Left ventricle myocardium inferior (tissue), 1 donor: ENCODE measurements at regions of chr1 and their contacts with region 1.

Region 1: DNA sequence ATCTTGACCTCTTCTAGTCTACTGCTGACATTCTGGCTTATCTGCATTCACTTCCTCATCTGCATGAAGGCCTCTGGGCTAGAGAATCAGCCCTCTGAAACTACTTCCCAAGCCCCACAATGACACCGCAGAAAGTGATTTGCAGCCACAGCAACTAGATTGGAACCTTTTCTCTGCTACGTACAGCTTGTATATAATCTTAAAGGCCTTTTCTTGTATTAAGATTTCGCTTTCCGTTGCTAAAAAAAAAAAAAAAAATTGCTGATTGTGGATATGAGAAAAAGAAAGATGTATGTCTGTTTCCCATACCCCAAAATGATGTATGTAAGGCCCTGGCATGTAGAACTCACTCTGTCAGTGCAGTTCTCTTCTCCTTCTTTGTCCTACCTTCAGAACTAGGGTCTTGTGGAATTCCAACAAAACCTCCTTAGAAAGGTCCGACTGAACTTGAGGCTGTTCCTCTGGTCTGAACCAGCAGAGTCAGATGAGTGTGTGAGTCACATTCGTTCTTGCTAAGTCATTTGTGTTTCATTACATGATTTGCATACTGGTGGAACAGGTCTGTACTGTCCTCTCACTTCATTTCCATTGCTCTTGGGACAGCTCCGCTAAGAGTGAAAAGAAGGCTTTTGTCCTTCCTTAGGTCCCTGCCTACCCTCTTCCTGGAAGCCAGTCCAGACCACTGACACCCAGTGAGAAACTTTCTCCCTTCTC is 62.7 kb downstream of the PLPP3 start:
- DNase-seq: no peak
- H3K4me3 ChIP-seq: no peak overlapping the region
- H3K27ac ChIP-seq: peak overlapping the region; percentile 83
- H3K4me1 ChIP-seq: peaks cover 99% of the 10 kb centered on the region
- H3K27me3 ChIP-seq: no peaks in the 10 kb centered on the region
- CTCF ChIP-seq: no peak

Region 2: GRCh38 chr1:55974714-55975511 is 541.8 kb before region 1 on chr1:
- intact Hi-C with region 1: no loop called
- DNase-seq: no peak
- H3K4me3 ChIP-seq: no peak overlapping the region
- H3K27ac ChIP-seq: no peak overlapping the region
- H3K4me1 ChIP-seq: no peaks in the 10 kb centered on the region
- H3K27me3 ChIP-seq: no peaks in the 10 kb centered on the region
- CTCF ChIP-seq: no peak

Region 3: DNA sequence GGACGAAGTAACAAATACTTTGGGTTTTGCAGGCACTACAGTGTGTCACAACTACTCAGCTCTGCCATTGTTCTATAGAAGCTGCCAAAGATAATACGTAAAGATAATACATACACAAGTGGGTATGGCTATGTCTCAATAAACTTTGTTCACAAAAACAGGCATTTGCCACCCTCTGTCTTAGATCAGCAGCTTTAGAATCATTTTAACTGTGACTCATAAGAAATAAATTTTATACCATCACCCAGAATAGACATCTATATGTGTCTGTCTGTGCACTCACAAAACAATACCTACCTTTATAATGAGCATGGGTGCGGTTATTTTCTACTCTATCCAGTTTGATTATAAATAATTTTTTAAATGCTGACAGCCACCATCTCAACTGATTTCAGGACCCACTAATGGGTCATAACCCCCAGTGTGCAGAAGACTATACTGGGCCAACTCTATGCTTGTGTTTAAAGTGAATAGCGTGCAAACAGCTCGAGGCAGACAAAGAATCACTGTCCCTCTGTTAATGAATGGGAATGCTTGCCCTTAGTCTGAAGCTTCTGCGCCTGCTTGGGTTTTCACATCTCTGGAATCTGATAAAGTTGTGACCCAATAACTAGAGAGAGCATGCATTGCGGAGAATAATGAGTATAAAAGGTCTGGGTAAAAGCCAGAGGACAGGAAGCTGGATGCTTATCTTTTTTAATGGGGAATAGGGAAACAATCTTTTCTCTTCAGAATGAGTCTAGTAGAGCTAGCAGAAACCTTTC is 153.5 kb before region 1 on chr1:
- intact Hi-C with region 1: no loop called
- DNase-seq: no peak
- H3K4me3 ChIP-seq: no peak overlapping the region
- H3K27ac ChIP-seq: no peak overlapping the region
- H3K4me1 ChIP-seq: peaks cover 17% of the 10 kb centered on the region
- H3K27me3 ChIP-seq: no peaks in the 10 kb centered on the region
- CTCF ChIP-seq: no peak

Region 4: DNA sequence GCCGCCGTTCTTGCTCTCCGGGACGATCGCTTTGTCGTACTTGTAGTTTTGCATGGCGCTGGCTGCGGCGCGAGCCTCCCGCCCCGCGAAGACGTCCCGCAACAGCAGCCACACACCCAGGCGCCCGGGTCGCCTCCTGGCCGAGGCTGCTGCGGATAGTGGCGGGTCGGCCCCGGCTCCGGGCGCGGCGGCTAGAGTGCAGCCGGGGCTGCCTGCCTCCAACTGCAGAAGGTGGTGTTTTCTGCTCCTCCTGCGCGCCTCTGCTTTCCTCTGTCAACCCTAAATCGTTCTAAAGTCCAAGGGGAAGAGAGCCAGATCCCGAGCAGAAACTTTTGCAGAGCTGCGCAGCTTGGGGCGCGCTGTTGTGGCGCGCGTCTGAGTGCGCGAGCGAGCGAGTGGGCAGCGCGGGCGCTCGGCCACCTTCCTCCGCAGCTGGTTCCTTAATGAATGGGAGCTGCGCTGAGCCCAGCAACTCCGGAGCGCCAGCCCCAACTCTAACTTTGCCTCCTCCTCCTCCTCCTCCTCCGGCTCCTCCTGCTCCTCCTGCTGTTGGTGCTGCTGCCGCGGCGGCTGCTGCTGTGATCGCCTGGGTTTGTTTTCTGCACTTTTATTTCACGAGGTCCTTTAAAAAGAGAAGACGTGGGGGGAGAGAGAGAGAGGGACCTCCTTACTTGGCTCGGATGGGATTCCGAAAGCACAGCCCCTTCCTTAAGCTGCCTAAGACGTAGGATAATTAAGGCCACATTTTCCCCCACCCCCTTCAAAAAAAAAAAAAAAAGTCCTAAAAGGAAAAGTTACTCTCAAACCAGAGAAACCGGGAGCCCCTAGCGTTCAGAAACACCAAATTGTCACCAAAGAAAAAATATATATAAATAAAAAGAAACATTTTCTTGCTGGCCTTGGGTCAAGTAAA is 62.5 kb after region 1 on chr1 and contains the start of gene PLPP3:
- intact Hi-C with region 1: loop called (anchors 10 kb)
- DNase-seq: peak; percentile 87
- H3K4me3 ChIP-seq: peak within 1 kb of the TSS; percentile 88
- H3K27ac ChIP-seq: peak within 1 kb of the TSS; percentile 97
- H3K4me1 ChIP-seq: peaks cover 59% of the 10 kb centered on the region
- H3K27me3 ChIP-seq: no peaks in the 10 kb centered on the region
- CTCF ChIP-seq: peak; percentile 59
- total RNA-seq, gene PLPP3: 101 TPM